Activated CD4-positive, alpha-beta memory T cell treated with anti-CD3 and anti-CD28 coated beads, Interleukin-2, amount 10 ng/mL, durations not matched to agents 7 days and 5 days (primary cell): ENCODE measurements at regions of chr17 and their contacts with region 1.

Region 1: DNA sequence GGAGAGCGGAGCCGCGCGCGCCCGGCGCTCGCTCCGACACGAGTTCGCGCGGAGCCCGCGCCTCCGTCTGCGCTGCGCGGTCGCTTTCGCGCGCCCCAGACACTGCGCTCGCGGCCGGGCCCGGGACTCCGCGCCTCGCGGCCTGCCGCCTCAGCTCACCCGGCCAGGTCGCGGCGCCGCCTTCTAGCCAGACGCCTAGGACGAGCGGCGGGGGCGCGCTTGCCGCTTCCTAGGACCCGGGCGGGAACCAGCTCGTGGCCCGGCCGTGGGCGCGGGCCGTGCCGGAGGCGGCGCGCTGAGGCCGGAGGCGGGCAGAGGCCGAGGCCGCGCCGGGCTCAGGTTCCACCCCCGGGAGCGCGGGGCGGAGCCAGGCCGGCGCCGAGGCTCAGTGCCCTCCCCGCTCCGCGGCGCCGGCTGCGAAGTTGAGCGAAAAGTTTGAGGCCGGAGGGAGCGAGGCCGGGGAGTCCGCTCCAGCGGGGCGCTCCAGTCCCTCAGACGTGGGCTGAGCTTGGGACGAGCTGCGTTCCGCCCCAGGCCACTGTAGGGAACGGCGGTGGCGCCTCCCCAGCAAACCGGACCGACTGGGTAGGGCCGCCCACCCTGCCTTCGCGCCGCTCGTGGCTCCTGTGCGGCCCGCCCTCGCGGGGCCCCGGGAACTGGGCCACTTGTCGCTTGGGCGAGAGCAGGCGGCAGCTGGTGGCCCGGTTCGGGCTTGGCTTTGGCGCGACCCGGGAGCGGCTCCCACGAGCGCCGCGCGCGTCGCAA is at the start of gene SPHK1:
- DNase-seq: peak; percentile 76
- H3K4me3 Mint-ChIP-seq: peak within 1 kb of the TSS; percentile 78
- H3K27ac Mint-ChIP-seq: peak within 1 kb of the TSS; percentile 81
- H3K4me1 Mint-ChIP-seq: peaks cover 11% of the 10 kb centered on the region
- H3K27me3 Mint-ChIP-seq: no peaks in the 10 kb centered on the region
- total RNA-seq, gene SPHK1: 2.8 to 3.4 TPM

Region 2: GRCh38 chr17:76296186-76296585 is 88.2 kb before region 1 on chr17:
- CTCF ChIA-PET with region 1: interaction called, 10 read pairs
- POLR2A ChIA-PET with region 1: no interaction called
- DNase-seq: no peak
- H3K4me3 Mint-ChIP-seq: no peak overlapping the region
- H3K27ac Mint-ChIP-seq: no peak overlapping the region
- H3K4me1 Mint-ChIP-seq: peaks cover 3% of the 10 kb centered on the region
- H3K27me3 Mint-ChIP-seq: no peaks in the 10 kb centered on the region

Region 3: GRCh38 chr17:76304226-76305134 is 79.9 kb before region 1 on chr17:
- CTCF ChIA-PET with region 1: interaction called, 24 read pairs
- POLR2A ChIA-PET with region 1: interaction called, 9 read pairs
- DNase-seq: no peak
- H3K4me3 Mint-ChIP-seq: no peak overlapping the region
- H3K27ac Mint-ChIP-seq: no peak overlapping the region
- H3K4me1 Mint-ChIP-seq: peaks cover 1% of the 10 kb centered on the region
- H3K27me3 Mint-ChIP-seq: no peaks in the 10 kb centered on the region

Region 4: DNA sequence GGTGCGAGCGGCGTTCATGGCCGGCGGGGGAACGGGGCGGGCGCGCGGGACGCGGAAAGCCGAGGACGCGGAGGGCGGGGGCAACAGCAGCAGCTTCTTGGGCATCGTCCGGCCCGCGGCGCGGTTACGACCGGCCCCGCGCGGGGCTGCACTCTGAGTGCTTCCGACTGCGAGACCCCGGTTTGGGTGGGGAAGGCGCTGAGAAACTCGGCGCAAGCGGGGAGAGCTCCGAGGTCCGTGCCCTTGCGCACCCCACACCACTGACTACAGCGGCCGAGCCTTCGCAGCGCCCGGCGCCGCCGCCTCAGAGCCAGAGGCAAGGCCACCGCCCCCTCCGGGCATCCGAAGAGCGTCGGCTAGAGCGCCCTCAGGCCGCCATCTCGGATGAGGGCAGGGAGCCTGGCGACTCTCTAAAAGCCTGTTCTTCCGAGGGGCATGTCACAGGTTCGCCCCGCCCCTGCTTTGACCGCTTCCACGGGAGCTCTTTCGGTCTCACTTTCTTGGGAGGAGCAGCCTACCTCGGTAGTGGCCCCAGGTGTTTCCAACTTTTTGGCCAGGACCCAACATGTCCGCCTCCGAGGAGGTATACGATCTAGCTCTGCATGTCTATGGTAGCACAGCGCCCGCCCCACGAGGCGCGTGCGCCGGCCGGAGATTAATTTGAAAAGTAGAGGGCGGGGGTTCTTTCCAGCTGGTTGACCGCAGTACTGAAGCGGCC is 30.6 kb before region 1 on chr17 and contains the start of gene PRPSAP1:
- CTCF ChIA-PET with region 1: interaction called, 48 read pairs
- POLR2A ChIA-PET with region 1: interaction called, 87 read pairs
- DNase-seq: peak; percentile 84
- H3K4me3 Mint-ChIP-seq: peak within 1 kb of the TSS; percentile 94
- H3K27ac Mint-ChIP-seq: peak within 1 kb of the TSS; percentile 97
- H3K4me1 Mint-ChIP-seq: peaks cover 30% of the 10 kb centered on the region
- H3K27me3 Mint-ChIP-seq: no peaks in the 10 kb centered on the region
- total RNA-seq, gene PRPSAP1: 59.9 to 66.7 TPM

Region 5: DNA sequence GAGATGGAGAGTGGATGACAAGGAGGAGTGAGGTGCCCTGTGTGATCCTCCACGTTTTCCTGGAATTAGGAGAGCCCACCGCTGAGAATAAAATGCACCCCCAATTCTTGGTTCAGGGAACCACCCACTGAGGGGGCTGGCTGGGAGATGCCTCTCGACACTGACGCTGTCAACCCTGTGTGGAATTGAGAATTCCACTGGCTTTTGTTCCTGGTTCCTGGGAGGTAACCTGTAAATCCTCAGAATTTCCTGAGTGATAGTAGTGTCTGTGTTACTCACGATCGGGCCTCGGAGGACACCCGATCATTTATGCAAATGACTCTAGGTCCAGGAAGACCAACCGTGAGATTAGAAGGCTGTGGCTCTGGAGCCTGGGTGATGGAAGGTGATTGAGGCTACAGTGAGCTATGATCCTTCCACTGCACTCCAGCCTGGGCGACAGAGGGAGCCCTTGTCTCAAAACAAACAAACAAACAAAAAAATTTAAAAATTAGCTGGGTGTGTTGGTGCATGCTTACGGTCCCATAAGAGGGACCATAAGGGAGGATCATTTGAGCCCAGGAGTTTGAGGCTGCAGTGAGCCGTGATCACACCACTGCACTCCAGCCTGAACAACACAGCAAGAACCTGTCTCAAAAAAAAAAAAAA is 19.0 kb before region 1 on chr17:
- CTCF ChIA-PET with region 1: interaction called, 29 read pairs
- POLR2A ChIA-PET with region 1: interaction called, 7 read pairs
- DNase-seq: no peak
- H3K4me3 Mint-ChIP-seq: no peak overlapping the region
- H3K27ac Mint-ChIP-seq: no peak overlapping the region
- H3K4me1 Mint-ChIP-seq: peaks cover 2% of the 10 kb centered on the region
- H3K27me3 Mint-ChIP-seq: peaks cover 2% of the 10 kb centered on the region

Region 6: GRCh38 chr17:76414334-76415295 is 30.2 kb after region 1 on chr17:
- CTCF ChIA-PET with region 1: no interaction called
- POLR2A ChIA-PET with region 1: no interaction called
- DNase-seq: no peak
- H3K4me3 Mint-ChIP-seq: no peak overlapping the region
- H3K27ac Mint-ChIP-seq: no peak overlapping the region
- H3K4me1 Mint-ChIP-seq: no peaks in the 10 kb centered on the region
- H3K27me3 Mint-ChIP-seq: no peaks in the 10 kb centered on the region